ENCODE measurements at regions of chr4 and their contacts with region 1.

Region 1: GRCh38 chr4:128191115-128191781 is 96.4 kb downstream of the PGRMC2 start:
- DNase-seq: peak; percentile 54 to 79 (median 63)
- H3K4me3 ChIP-seq: no peak overlapping the region
- H3K4me3 Mint-ChIP-seq: no peak overlapping the region
- H3K27ac ChIP-seq: no peak overlapping the region
- H3K27ac Mint-ChIP-seq: peak overlapping the region in 2 of 7 donors; percentile 63 to 79
- H3K4me1 ChIP-seq: no peaks in the 10 kb centered on the region
- H3K4me1 Mint-ChIP-seq: peaks cover 3 to 6% (median 4%) of the 10 kb centered on the region in 4 donors
- H3K27me3 ChIP-seq: no peaks in the 10 kb centered on the region
- H3K27me3 Mint-ChIP-seq: no peaks in the 10 kb centered on the region

Region 2: DNA sequence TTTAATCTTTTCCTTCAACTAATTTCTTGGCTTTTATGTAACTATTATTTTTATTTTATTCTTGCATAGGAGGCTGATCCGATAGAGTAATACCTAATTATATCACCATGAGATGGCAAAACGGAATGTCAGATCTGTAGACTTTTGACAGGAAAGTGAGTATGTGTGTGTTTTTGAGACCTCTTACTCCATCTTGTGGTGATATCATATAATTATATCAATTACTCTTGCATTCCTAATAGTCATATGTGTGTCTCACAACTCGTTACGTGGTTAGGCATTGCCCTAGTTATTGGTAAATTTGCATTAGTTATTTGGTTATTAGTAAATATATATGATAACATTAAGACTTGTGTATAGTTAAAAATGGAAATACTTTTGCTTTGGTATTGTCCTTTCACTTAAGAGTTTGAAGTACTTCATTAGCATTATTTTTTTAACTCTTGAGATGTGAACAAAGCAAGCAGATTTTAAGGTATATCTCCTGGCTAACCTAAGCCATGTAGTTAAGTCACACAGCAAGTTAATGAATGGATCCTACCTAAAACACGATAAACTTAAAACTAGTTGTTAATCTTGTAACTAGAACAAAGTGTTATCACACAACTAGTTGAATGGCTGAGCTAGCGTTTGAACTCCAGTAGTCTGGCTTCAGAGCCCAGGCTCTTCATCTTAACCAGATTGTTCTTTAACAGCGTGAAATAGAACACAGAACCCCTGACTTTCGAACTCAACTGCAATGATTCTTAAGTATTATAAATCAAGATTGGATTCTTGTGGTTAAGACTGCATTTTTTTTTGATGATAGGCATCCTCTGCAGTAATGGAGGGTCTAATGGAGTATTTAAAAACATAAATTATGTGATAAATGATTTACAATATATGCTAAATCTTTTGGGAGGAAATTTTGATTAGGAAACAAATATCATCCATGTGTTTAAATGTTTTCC is 29.3 kb after region 1 on chr4:
- CTCF ChIA-PET with region 1: interaction called, 6 read pairs
- POLR2A ChIA-PET with region 1: no interaction called
- intact Hi-C with region 1: loop called (anchors 2 kb)
- DNase-seq: peak in 2 of 5 donors; percentile 7 to 16
- H3K4me3 ChIP-seq: no peak overlapping the region
- H3K4me3 Mint-ChIP-seq: no peak overlapping the region
- H3K27ac ChIP-seq: no peak overlapping the region
- H3K27ac Mint-ChIP-seq: no peak overlapping the region
- H3K4me1 ChIP-seq: no peaks in the 10 kb centered on the region
- H3K4me1 Mint-ChIP-seq: no peaks in the 10 kb centered on the region
- H3K27me3 ChIP-seq: no peaks in the 10 kb centered on the region
- H3K27me3 Mint-ChIP-seq: peaks cover 0 to 1% of the 10 kb centered on the region in 2 donors

Region 3: GRCh38 chr4:128287871-128288688 is 96.8 kb after region 1 on chr4:
- CTCF ChIA-PET with region 1: no interaction called
- POLR2A ChIA-PET with region 1: no interaction called
- intact Hi-C with region 1: loop called (anchors 10 kb)
- DNase-seq: peak; percentile 97 to 100 (median 99)
- H3K4me3 ChIP-seq: peak overlapping the region; percentile 33 to 87
- H3K4me3 Mint-ChIP-seq: peak overlapping the region; percentile 81 to 91 (median 88)
- H3K27ac ChIP-seq: peak overlapping the region; percentile 88
- H3K27ac Mint-ChIP-seq: peak overlapping the region; percentile 80 to 97 (median 96)
- H3K4me1 ChIP-seq: peaks cover 43% of the 10 kb centered on the region
- H3K4me1 Mint-ChIP-seq: peaks cover 24 to 42% (median 31%) of the 10 kb centered on the region in 4 donors
- H3K27me3 ChIP-seq: no peaks in the 10 kb centered on the region
- H3K27me3 Mint-ChIP-seq: no peaks in the 10 kb centered on the region

Region 4: DNA sequence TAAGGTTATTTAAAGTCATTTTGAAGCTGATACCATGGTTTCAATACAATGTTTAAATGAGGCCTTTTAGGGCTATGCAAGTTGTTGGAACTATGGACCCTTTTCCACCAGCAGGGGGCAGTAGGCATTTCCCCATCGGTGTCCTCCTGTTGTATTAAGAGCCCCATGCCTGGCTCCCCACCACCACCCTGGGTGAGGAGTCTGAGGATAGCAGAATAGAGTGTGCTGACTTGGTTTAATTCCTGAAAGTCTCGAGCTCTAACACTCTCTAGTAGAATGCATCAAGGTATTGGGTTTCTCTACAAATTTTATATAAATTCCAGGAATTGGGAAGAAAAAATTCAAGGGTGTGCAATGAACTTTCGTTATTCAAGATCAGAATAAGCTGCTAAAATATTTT is 383.5 kb after region 1 on chr4:
- CTCF ChIA-PET with region 1: interaction called, 3 read pairs
- POLR2A ChIA-PET with region 1: no interaction called
- intact Hi-C with region 1: loop called (anchors 10 kb)
- DNase-seq: peak; percentile 38 to 52 (median 43)
- H3K4me3 ChIP-seq: no peak overlapping the region
- H3K4me3 Mint-ChIP-seq: no peak overlapping the region
- H3K27ac ChIP-seq: no peak overlapping the region
- H3K27ac Mint-ChIP-seq: no peak overlapping the region
- H3K4me1 ChIP-seq: no peaks in the 10 kb centered on the region
- H3K4me1 Mint-ChIP-seq: no peaks in the 10 kb centered on the region
- H3K27me3 ChIP-seq: no peaks in the 10 kb centered on the region
- H3K27me3 Mint-ChIP-seq: peaks cover 4% of the 10 kb centered on the region in 2 donors

Region 5: DNA sequence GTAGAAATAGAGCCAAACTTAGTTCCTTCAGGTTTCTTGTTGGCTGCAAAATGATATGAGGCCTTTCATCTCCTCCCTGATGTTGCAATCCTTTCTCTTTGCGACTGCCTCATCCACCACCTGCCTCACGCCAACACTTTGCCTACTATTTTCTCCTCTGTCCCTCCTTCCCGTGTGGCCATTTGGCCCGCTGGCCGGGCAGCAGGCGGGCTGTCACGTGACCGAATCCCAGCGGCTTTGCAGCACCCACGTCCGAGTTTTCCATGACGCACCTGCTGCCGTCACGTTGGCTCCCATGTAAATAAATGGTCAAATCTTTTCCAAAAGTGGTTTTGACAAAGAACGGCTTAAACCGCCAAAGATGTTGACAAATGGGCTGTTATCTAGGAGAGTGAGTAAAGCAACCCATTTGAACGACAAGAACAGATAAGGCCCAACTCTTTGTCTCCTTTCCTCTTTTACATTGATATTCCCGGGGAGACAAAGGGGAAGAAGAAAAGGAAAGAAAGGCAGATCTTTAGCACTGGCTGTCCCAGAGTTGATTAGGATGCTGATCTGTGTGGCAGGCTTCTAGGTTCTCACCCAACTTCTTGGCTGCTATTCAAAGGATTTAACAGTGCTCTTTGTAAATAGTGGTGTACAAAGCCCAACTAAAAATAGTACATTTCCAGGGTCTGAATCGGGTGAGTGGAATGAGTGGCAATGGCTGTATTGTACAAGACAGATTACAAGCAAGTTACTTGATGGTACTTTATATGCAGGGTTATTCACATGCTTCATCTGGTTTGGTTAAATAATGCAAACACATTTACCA is 444.1 kb after region 1 on chr4:
- CTCF ChIA-PET with region 1: no interaction called
- POLR2A ChIA-PET with region 1: no interaction called
- intact Hi-C with region 1: no loop called
- DNase-seq: no peak
- H3K4me3 ChIP-seq: no peak overlapping the region
- H3K4me3 Mint-ChIP-seq: no peak overlapping the region
- H3K27ac ChIP-seq: no peak overlapping the region
- H3K27ac Mint-ChIP-seq: no peak overlapping the region
- H3K4me1 ChIP-seq: no peaks in the 10 kb centered on the region
- H3K4me1 Mint-ChIP-seq: no peaks in the 10 kb centered on the region
- H3K27me3 ChIP-seq: no peaks in the 10 kb centered on the region
- H3K27me3 Mint-ChIP-seq: peaks cover 1 to 2% of the 10 kb centered on the region in 2 donors

Region 6: GRCh38 chr4:128782076-128782715 is 590.9 kb after region 1 on chr4:
- CTCF ChIA-PET with region 1: interaction called, 6 read pairs
- POLR2A ChIA-PET with region 1: no interaction called
- intact Hi-C with region 1: loop called (anchors 1 kb)
- DNase-seq: peak; percentile 47 to 64 (median 61)
- H3K4me3 ChIP-seq: no peak overlapping the region
- H3K4me3 Mint-ChIP-seq: no peak overlapping the region
- H3K27ac ChIP-seq: no peak overlapping the region
- H3K27ac Mint-ChIP-seq: no peak overlapping the region
- H3K4me1 ChIP-seq: no peaks in the 10 kb centered on the region
- H3K4me1 Mint-ChIP-seq: peaks cover 0 to 2% (median 0%) of the 10 kb centered on the region in 4 donors
- H3K27me3 ChIP-seq: no peaks in the 10 kb centered on the region
- H3K27me3 Mint-ChIP-seq: peaks cover 3 to 5% of the 10 kb centered on the region in 2 donors

Region 7: GRCh38 chr4:128863312-128864075 is 672.2 kb after region 1 on chr4:
- CTCF ChIA-PET with region 1: interaction called, 5 read pairs
- POLR2A ChIA-PET with region 1: no interaction called
- intact Hi-C with region 1: loop called (anchors 1 kb)
- DNase-seq: peak; percentile 56 to 69 (median 61)
- H3K4me3 ChIP-seq: no peak overlapping the region
- H3K4me3 Mint-ChIP-seq: peak overlapping the region in 2 of 8 donors; percentile 58 to 75
- H3K27ac ChIP-seq: peak overlapping the region; percentile 50
- H3K27ac Mint-ChIP-seq: peak overlapping the region; percentile 0 to 94 (median 87)
- H3K4me1 ChIP-seq: peaks cover 29% of the 10 kb centered on the region
- H3K4me1 Mint-ChIP-seq: peaks cover 36 to 49% (median 42%) of the 10 kb centered on the region in 4 donors
- H3K27me3 ChIP-seq: no peaks in the 10 kb centered on the region
- H3K27me3 Mint-ChIP-seq: no peaks in the 10 kb centered on the region

Region 8: GRCh38 chr4:129362674-129363274 is 1171.5 kb after region 1 on chr4:
- CTCF ChIA-PET with region 1: no interaction called
- POLR2A ChIA-PET with region 1: no interaction called
- intact Hi-C with region 1: loop called (anchors 10 kb)
- DNase-seq: peak; percentile 33 to 43 (median 40)
- H3K4me3 ChIP-seq: no peak overlapping the region
- H3K4me3 Mint-ChIP-seq: no peak overlapping the region
- H3K27ac ChIP-seq: no peak overlapping the region
- H3K27ac Mint-ChIP-seq: no peak overlapping the region
- H3K4me1 ChIP-seq: no peaks in the 10 kb centered on the region
- H3K4me1 Mint-ChIP-seq: no peaks in the 10 kb centered on the region
- H3K27me3 ChIP-seq: no peaks in the 10 kb centered on the region
- H3K27me3 Mint-ChIP-seq: peaks cover 2 to 5% of the 10 kb centered on the region in 2 donors